ENCODE measurements at regions of chr5 and their contacts with region 1.

Region 1: DNA sequence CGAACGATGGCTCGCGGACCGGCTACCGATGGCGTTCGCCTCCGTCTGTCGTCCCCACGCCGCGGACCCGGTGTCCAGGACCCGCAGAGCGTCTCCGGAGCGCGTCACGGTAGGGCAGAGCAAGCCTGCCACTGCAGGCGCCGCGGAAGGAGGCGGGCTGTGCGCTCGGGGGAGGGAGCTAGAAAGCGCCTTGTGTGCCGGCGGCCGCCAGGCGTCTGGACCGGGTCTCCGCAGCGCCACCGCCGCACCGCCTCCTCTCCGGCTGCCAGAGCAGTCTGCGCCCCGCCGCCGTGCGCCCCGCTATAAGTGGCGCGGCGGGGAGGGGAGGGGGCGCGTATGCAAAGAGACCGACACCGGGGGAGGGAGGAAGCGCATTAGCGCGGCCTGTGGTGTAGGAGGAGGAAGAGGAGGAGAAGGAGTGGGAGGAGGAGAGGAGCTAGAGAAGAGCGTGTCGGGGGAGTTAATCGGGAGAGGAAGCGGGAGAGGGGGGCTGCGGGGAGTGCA is at the start of gene ENC1:
- H3K4me3 Mint-ChIP-seq: peak within 1 kb of the TSS; percentile 94
- H3K27ac Mint-ChIP-seq: peak within 1 kb of the TSS; percentile 81
- H3K4me1 Mint-ChIP-seq: peaks cover 62% of the 10 kb centered on the region
- H3K27me3 Mint-ChIP-seq: no peaks in the 10 kb centered on the region

Region 2: DNA sequence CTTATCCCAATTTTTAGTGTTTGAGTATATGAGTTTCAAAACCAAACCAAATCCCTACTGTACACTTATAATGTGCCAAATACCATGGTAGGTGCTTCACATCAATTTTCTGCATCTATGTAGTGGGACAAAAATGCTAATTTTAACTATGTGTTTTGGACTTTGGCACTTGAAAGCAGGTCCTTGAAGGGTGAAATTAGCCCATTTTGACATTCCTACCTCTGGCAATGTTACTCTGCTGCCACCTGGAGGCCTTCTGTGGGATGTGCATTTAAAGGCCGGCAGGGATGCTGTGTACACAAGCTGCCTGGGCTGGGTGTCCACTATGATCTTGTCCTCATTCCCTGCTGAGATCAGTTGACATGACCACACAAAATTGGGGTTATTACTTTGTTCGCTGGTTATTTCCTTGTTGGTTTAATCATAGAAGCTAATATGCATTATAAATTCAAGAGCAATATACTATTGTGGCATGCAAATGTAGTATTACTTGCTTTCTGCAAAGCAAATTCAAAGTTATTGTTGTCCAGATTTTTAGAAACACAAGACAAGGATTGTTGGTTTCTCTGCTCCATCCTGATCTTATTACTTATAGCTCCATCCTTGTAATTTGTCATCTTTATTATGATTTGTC is 847.7 kb before region 1 on chr5:
- intact Hi-C with region 1: loop called (anchors 10 kb)
- H3K4me3 Mint-ChIP-seq: no peak overlapping the region
- H3K27ac Mint-ChIP-seq: no peak overlapping the region
- H3K4me1 Mint-ChIP-seq: peaks cover 11% of the 10 kb centered on the region
- H3K27me3 Mint-ChIP-seq: no peaks in the 10 kb centered on the region

Region 3: GRCh38 chr5:74035521-74035981 is 605.0 kb before region 1 on chr5:
- intact Hi-C with region 1: loop called (anchors 2 kb)
- H3K4me3 Mint-ChIP-seq: no peak overlapping the region
- H3K27ac Mint-ChIP-seq: no peak overlapping the region
- H3K4me1 Mint-ChIP-seq: peaks cover 5% of the 10 kb centered on the region
- H3K27me3 Mint-ChIP-seq: no peaks in the 10 kb centered on the region

Region 4: DNA sequence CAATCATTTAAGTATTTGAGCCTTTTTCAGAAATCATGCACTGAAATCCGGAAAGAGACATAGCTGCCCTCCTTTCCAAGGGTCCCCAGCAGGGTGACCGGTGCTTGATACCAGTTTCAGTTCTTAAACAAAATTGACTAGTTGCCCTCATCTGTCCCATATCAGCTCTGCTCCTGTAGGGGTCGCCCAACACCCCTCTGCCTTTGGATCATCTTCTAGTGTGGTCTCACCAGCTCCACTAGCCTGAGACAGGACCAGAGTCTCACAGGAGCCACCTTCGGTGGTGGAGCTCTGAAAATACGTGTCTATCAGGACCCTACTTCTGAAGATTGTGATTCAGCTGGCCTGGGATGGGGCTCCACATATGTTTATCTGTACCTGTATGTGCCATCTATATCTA is 428.2 kb before region 1 on chr5:
- intact Hi-C with region 1: loop called (anchors 5 kb)
- H3K4me3 Mint-ChIP-seq: no peak overlapping the region
- H3K27ac Mint-ChIP-seq: no peak overlapping the region
- H3K4me1 Mint-ChIP-seq: no peaks in the 10 kb centered on the region
- H3K27me3 Mint-ChIP-seq: peaks cover 3% of the 10 kb centered on the region

Region 5: GRCh38 chr5:74394916-74395781 is 245.4 kb before region 1 on chr5:
- intact Hi-C with region 1: loop called (anchors 10 kb)
- H3K4me3 Mint-ChIP-seq: no peak overlapping the region
- H3K27ac Mint-ChIP-seq: no peak overlapping the region
- H3K4me1 Mint-ChIP-seq: peaks cover 36% of the 10 kb centered on the region
- H3K27me3 Mint-ChIP-seq: no peaks in the 10 kb centered on the region

Region 6: DNA sequence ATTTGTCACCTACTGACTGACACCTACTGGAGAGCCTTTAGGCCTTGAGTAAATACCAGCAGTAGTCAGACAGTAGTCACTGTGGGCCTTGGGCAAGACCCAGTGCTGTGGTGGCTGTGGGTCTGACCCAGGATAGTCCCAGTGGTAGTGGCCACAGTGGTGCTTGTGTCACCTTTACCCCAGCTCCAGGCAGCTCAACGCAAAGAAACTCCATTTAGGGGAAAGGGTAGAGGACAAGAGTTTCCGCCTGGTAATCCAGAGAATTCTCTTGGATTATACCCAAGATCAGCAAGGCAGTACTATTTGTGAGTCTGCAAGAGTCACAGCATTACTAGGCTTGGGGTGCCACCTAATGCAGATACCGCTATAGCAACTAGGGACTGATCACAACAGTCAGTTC is 842.0 kb after region 1 on chr5:
- intact Hi-C with region 1: no loop called
- H3K4me3 Mint-ChIP-seq: no peak overlapping the region
- H3K27ac Mint-ChIP-seq: no peak overlapping the region
- H3K4me1 Mint-ChIP-seq: peaks cover 32% of the 10 kb centered on the region
- H3K27me3 Mint-ChIP-seq: no peaks in the 10 kb centered on the region

Measured in dendritic cell treated with granulocyte-macrophage colony-stimulating factor and Interleukin-4, amounts not matched to agents 40 ng/mL and 50 ng/mL, for 4 days (primary cell).